OCI-LY7 (cell line): ENCODE measurements at regions of chr3 and their contacts with region 1.

Region 1: DNA sequence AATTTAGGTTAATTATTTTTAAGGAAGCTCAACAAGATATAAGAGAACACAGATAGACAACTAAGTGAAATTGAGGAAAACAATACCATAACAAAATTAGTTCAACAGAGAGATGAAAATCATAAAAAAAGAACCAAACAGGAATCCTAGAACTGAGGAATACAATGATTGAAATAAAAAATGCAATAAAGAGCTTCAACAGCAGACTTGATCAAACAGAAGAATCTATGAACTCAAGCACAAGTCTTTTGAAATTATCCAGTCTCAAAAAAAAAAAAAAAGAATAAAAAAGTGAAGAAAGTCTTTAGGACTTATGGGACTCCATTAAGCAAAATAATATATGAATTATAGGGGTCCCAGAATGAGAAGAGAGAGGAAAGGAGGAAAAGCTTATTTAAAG is 42.0 kb upstream of the GNB4 start:
- DNase-seq: no peak
- H3K4me3 ChIP-seq: no peak overlapping the region
- H3K27ac ChIP-seq: no peak overlapping the region
- H3K4me1 ChIP-seq: no peaks in the 10 kb centered on the region
- CTCF ChIP-seq: no peak

Region 2: GRCh38 chr3:179505534-179505933 is 12.3 kb after region 1 on chr3:
- CTCF ChIA-PET with region 1: no interaction called
- POLR2A ChIA-PET with region 1: interaction called, 10 read pairs
- intact Hi-C with region 1: no loop called
- DNase-seq: no peak
- H3K4me3 ChIP-seq: no peak overlapping the region
- H3K27ac ChIP-seq: no peak overlapping the region
- H3K4me1 ChIP-seq: no peaks in the 10 kb centered on the region
- CTCF ChIP-seq: no peak